Activated CD8-positive, alpha-beta T cell treated with anti-CD3 and anti-CD28 coated beads, Interleukin-2, amount 10 ng/mL, durations not matched to agents 7 days and 5 days (primary cell): ENCODE measurements at regions of chr6 and their contacts with region 1.

Region 1: GRCh38 chr6:127855542-127856159 is 45.2 kb downstream of the THEMIS start:
- DNase-seq: peak; percentile 61
- ATAC-seq: no peak
- H3K4me3 Mint-ChIP-seq: no peak overlapping the region
- H3K27ac Mint-ChIP-seq: peak overlapping the region; percentile 56
- H3K4me1 Mint-ChIP-seq: peaks cover 68% of the 10 kb centered on the region
- H3K27me3 Mint-ChIP-seq: no peaks in the 10 kb centered on the region

Region 2: DNA sequence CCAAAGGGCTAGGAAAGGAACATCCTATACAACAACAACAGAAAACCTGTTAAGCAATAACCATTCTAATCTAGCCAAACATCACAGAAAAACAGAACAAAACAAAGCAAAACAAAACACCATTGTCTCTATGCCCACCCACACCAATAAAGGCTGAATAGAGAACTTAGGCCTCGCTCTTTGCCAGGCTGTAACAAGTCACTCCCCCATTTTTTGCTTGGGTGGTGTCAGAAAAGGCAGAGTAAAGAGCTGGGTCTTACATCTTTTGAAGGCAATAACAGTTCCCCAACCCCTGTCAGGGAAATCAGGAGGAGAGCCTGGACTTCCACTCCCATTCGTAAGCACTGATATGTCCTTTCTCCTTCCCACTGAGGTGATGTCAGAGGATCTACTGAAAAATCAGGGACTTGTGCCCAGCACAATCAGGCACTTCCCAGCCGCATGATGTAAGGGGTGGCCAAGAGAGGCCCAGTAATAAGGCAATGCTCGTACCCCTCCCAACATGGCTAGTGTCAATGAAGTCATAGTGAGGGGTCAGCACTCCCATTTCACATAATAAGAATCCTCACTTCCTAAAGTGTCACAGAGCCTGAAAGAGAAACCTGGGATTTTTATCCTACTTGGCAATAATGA is 14.2 kb after region 1 on chr6:
- CTCF ChIA-PET with region 1: interaction called, 30 read pairs
- POLR2A ChIA-PET with region 1: no interaction called
- DNase-seq: no peak
- ATAC-seq: peak; percentile 41
- H3K4me3 Mint-ChIP-seq: no peak overlapping the region
- H3K27ac Mint-ChIP-seq: peak overlapping the region; percentile 65
- H3K4me1 Mint-ChIP-seq: peaks cover 58% of the 10 kb centered on the region
- H3K27me3 Mint-ChIP-seq: no peaks in the 10 kb centered on the region

Region 3: GRCh38 chr6:127900935-127901334 is 45.3 kb after region 1 on chr6 and contains the start of gene THEMIS:
- CTCF ChIA-PET with region 1: interaction called, 21 read pairs
- POLR2A ChIA-PET with region 1: interaction called, 4 read pairs
- DNase-seq: peak; percentile 83
- ATAC-seq: peak; percentile 76
- H3K4me3 Mint-ChIP-seq: peak within 1 kb of the TSS; percentile 97
- H3K27ac Mint-ChIP-seq: peak within 1 kb of the TSS; percentile 92
- H3K4me1 Mint-ChIP-seq: peaks cover 38% of the 10 kb centered on the region
- H3K27me3 Mint-ChIP-seq: no peaks in the 10 kb centered on the region
- total RNA-seq, gene THEMIS: 142 to 144 TPM

Region 4: DNA sequence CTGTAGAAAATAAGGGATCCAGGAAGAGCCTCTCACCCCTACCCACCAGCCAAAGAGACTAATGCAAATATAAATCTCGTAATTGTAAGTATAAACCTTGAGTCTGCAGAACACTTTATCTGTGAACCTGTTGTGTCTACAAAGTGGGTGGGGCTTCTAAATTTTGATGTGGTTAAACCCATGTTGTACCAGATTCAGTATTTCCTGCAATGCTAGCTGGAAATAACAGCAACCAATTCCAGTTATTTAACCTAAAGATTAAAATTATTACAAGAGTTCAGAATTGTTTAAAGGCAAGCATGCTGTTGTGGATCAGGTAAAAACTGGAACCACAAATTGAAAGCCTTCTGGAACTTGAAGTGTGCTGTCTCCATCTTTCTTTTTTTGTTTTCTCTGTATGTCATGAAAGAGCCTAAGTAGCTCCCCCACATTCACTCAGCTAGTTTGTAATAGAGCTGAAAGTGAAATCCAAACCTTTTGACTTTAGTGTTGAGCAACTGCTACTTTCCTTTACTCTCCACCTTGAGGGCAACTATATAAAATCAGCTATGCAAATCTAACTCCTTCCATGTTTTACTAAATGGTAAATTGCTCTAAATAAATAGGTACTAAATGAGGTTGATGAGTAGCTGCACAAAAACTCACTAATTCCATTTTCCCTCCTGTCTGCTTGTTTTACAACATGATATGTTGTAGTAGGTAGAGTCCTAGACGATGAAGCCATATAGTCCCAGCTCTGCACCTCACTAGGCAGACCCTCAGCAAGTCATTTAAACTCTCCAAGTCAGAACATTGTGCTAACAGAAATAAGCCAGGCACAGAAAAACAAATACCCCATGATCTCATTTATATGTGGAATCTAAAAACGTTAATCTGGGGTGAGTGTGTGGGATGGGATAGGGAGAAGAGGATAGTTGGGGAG is 63.1 kb after region 1 on chr6:
- CTCF ChIA-PET with region 1: interaction called, 15 read pairs
- POLR2A ChIA-PET with region 1: no interaction called
- DNase-seq: peak; percentile 56
- ATAC-seq: peak; percentile 69
- H3K4me3 Mint-ChIP-seq: peak overlapping the region; percentile 71
- H3K27ac Mint-ChIP-seq: peak overlapping the region; percentile 85
- H3K4me1 Mint-ChIP-seq: peaks cover 85% of the 10 kb centered on the region
- H3K27me3 Mint-ChIP-seq: no peaks in the 10 kb centered on the region

Region 5: GRCh38 chr6:127980996-127981395 is 125.3 kb after region 1 on chr6:
- CTCF ChIA-PET with region 1: interaction called, 25 read pairs
- POLR2A ChIA-PET with region 1: no interaction called
- DNase-seq: no peak
- ATAC-seq: no peak
- H3K4me3 Mint-ChIP-seq: peak overlapping the region; percentile 42
- H3K27ac Mint-ChIP-seq: peak overlapping the region; percentile 50
- H3K4me1 Mint-ChIP-seq: peaks cover 64% of the 10 kb centered on the region
- H3K27me3 Mint-ChIP-seq: no peaks in the 10 kb centered on the region

Region 6: DNA sequence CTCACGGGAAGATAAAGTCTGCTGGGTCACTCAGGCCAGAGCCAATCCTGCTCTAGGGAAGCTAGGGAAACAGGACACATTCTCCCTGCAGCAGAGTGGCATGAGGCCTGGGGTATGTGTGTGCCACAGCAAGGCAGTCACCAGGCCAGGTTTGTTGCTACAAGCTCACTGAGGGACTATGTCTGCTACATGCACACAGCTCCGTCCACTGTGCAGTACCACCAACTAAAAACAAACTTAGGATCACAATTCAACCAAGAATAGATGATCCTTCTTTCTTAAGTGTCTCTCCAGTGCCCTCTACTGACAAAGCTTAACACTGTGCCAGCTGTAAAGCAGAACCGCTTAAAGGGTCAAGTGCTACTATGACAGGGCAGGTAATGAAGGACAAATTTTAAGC is 472.2 kb after region 1 on chr6:
- CTCF ChIA-PET with region 1: interaction called, 29 read pairs
- POLR2A ChIA-PET with region 1: no interaction called
- DNase-seq: peak; percentile 57
- ATAC-seq: peak; percentile 74
- H3K4me3 Mint-ChIP-seq: no peak overlapping the region
- H3K27ac Mint-ChIP-seq: no peak overlapping the region
- H3K4me1 Mint-ChIP-seq: peaks cover 6% of the 10 kb centered on the region
- H3K27me3 Mint-ChIP-seq: peaks cover 2% of the 10 kb centered on the region